ENCODE measurements at regions of chr1 and their contacts with region 1.

Region 1: GRCh38 chr1:12124693-12125421 is 41.9 kb upstream of the TNFRSF1B start:
- DNase-seq: peak; percentile 82
- H3K4me3 Mint-ChIP-seq: no peak overlapping the region
- H3K27ac Mint-ChIP-seq: peak overlapping the region; percentile 61
- H3K4me1 Mint-ChIP-seq: peaks cover 28% of the 10 kb centered on the region
- H3K27me3 Mint-ChIP-seq: no peaks in the 10 kb centered on the region

Region 2: DNA sequence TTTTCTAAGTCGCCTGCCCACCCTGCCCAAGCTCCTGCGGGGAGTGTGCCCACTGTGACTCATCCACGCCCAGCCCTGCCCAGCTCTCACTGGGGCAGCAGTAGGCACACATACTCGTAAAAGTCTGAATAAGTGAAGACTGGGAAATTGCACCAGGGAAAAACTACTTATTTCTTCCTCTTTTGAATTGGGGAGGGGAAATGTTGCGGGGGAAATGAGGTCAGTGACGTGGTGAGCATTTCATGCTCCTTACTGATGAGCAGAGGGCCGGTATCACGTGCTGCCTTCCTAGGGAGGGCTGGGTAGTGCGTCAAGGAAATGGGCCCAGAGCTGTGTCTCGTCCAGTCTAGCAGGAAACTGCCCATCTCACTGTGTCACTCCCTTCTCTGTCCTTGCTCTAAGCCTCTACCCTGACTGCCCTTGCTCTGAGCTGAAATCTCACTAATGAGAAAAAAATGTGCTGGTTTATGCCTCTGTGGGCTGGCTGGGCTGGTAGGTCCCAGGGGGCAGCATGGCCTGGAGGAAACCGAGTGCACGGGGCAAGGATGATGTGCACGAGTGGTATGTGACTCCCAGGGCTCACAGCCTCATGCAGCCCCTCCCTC is 28.4 kb after region 1 on chr1:
- CTCF ChIA-PET with region 1: interaction called, 45 read pairs
- POLR2A ChIA-PET with region 1: interaction called, 10 read pairs
- DNase-seq: peak; percentile 51
- H3K4me3 Mint-ChIP-seq: no peak overlapping the region
- H3K27ac Mint-ChIP-seq: peak overlapping the region; percentile 98
- H3K4me1 Mint-ChIP-seq: peaks cover 91% of the 10 kb centered on the region
- H3K27me3 Mint-ChIP-seq: no peaks in the 10 kb centered on the region

Region 3: GRCh38 chr1:12177999-12178441 is 53.2 kb after region 1 on chr1:
- CTCF ChIA-PET with region 1: interaction called, 85 read pairs
- POLR2A ChIA-PET with region 1: interaction called, 32 read pairs
- DNase-seq: peak; percentile 81
- H3K4me3 Mint-ChIP-seq: peak overlapping the region; percentile 68
- H3K27ac Mint-ChIP-seq: peak overlapping the region; percentile 94
- H3K4me1 Mint-ChIP-seq: peaks cover 91% of the 10 kb centered on the region
- H3K27me3 Mint-ChIP-seq: no peaks in the 10 kb centered on the region

Region 4: DNA sequence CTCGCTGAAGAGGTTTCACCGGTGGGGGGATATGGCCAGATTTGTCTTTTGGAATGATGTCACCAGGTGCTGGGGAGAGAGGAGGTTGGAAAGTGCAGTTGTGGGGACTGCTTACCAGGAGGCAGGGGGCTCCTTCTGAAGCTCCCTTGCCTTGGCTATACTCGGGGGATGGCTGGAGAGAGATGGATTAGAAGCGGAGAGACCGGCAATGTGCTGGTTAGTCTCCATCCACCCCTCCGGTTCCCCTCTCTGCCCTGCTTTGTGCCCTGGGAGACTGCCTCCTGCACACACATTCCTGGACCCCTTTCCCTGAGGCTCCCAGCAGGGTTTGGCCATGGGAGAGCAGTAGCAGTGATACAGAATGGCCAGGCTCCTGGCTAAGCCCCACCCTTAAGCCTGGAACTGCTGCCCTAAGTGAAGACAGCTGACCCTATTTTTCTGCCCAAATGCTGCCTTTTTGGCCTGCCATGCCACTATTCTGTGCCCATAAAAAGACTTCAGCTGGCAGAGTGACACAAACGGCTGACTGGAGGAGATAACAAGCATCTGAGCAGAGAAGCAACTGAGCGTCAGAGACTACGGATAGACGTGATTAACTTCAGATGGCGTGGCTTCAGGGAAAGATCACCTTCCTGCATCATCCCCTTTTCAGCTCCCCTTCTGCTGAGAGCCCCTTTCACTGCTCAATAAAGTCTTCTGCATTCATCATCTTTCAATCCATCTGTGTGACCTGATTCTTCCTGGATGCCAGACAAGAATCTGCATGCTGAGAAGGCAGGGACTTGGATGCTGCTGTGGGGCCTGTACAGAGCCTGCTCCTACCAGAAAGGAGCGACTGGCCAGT is 90.5 kb after region 1 on chr1:
- CTCF ChIA-PET with region 1: interaction called, 172 read pairs
- POLR2A ChIA-PET with region 1: interaction called, 57 read pairs
- DNase-seq: no peak
- H3K4me3 Mint-ChIP-seq: no peak overlapping the region
- H3K27ac Mint-ChIP-seq: no peak overlapping the region
- H3K4me1 Mint-ChIP-seq: peaks cover 17% of the 10 kb centered on the region
- H3K27me3 Mint-ChIP-seq: peaks cover 15% of the 10 kb centered on the region

Region 5: GRCh38 chr1:12244078-12244477 is 119.2 kb after region 1 on chr1:
- CTCF ChIA-PET with region 1: interaction called, 22 read pairs
- POLR2A ChIA-PET with region 1: interaction called, 4 read pairs
- DNase-seq: peak; percentile 18
- H3K4me3 Mint-ChIP-seq: no peak overlapping the region
- H3K27ac Mint-ChIP-seq: no peak overlapping the region
- H3K4me1 Mint-ChIP-seq: no peaks in the 10 kb centered on the region
- H3K27me3 Mint-ChIP-seq: no peaks in the 10 kb centered on the region